H1 (cell line): ENCODE measurements at regions of chr11 and their contacts with region 1.

Region 1: DNA sequence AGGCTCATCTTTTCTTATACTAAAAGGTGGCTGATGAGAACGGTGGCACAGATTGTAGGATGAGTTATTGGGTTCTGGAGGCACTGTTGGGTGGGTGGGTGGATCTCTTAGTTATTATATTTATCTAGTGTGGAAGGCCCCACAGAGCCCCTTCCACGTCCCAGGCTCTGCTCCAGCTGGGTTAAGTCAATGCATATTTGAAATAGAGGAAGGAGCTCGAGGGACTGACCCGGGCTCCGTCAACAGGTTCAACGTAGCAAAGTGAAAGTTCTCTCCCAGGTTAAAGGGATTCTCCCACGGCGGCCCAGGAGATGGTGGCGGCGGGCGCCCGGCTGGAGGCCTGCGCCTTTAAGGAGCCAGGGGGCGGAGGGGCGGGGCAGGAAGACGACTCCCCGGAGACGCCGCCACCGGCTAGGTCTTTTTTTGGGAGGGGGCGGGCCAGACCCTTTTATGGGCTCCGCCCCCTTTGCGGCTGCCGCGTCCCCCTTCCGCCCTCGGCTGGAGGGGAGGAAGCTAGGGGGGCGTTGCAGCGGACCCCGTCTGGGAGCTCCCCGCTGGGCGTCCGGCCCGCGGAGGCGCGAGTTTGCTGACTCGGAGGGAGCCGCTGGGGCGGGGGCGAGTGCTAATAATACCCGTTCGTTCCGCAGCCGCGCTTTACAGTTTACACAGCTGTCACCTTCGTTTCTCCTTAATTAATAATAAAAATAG is 1.5 kb upstream of the INPPL1 start:
- DNase-seq: peak; percentile 84 to 92
- H3K4me3 ChIP-seq: peak overlapping the region; percentile 67 to 89 (median 76)
- H3K27ac ChIP-seq: no peak overlapping the region
- H3K4me1 ChIP-seq: peaks cover 10 to 11% (median 11%) of the 10 kb centered on the region in 4 experiments; a peak in 6 of 7 replicates
- H3K27me3 ChIP-seq: no peaks in the 10 kb centered on the region; a peak in 2 of 7 replicates
- CTCF ChIP-seq: 0 out of 4 replicates have a peak, but pooled peaks of 1 of the 3 experiments have one; percentile 1
- EP300 ChIP-seq: peak in 1 of 2 experiments; percentile 42; a peak in 1 of 3 replicates
- POLR2A ChIP-seq: no peak
- RAD21 ChIP-seq: no peak; a peak in 1 of 4 replicates

Region 2: GRCh38 chr11:72238040-72238450 is 15.0 kb after region 1 on chr11:
- CTCF ChIA-PET with region 1: interaction called, 72 read pairs
- POLR2A ChIA-PET with region 1: interaction called, 160 read pairs
- DNase-seq: peak; percentile 85 to 92
- H3K4me3 ChIP-seq: peak overlapping the region in 3 of 4 experiments; percentile 9 to 60 (median 34); a peak in 4 of 8 replicates
- H3K27ac ChIP-seq: 0 out of 2 replicates have a peak overlapping the region, but pooled peaks have one; percentile 6
- H3K4me1 ChIP-seq: peaks cover 3 to 29% (median 23%) of the 10 kb centered on the region in 4 experiments
- H3K27me3 ChIP-seq: peaks cover 36 to 47% (median 44%) of the 10 kb centered on the region in 4 experiments
- CTCF ChIP-seq: peak; percentile 88 to 95 (median 92)
- EP300 ChIP-seq: peak in 1 of 2 experiments; percentile 56; a peak in 1 of 3 replicates
- POLR2A ChIP-seq: no peak
- RAD21 ChIP-seq: peak; percentile 74 to 81

Region 3: DNA sequence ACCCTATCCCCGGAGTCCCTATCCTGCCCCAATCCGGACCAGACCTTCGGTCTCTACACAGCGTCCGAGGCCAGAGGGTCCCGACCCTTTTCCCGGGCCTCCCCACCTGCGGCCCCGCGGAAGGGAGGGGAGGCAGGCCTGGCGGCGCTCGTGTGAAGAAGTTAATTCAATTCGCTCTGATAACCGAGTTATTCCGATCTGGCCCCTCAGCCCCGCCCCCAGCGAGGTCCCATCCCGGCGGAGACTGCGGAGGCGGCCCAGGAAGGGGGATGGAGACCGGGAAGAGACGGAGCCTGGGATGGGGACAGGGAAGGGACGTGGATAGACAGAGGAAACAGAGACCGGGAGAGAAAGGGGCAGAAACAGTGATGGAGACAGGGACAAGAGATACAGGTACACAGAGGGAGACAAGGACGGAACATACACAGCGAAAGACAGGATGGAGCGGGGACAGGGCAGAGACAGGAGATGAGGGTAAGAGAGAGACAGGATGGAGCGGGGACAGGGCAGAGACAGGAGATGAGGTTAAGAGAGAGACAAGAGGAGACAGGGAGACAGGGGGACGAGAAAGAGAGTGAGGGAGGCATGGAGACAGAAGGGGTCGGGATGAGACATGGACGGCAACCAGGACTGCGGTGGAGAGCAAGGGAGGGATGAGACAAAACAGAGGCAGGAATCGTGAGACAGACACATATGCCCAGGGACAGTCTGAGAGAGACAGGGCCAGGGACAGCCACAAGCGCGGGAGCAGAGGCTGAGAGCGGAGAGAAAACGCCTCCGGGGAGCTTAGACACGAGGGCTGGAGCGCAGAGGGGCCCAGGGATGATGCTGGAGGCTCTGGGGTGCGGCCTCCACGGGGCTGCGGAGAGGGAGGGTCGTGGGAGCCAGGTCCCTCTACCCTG is 21.6 kb after region 1 on chr11:
- CTCF ChIA-PET with region 1: interaction called, 12 read pairs
- POLR2A ChIA-PET with region 1: interaction called, 160 read pairs
- DNase-seq: peak in 1 of 2 experiments; percentile 83
- H3K4me3 ChIP-seq: peak overlapping the region; percentile 53 to 87 (median 58)
- H3K27ac ChIP-seq: no peak overlapping the region
- H3K4me1 ChIP-seq: peaks cover 2 to 24% (median 11%) of the 10 kb centered on the region in 4 experiments
- H3K27me3 ChIP-seq: peaks cover 69 to 85% (median 81%) of the 10 kb centered on the region in 4 experiments
- CTCF ChIP-seq: no peak
- EP300 ChIP-seq: no peak
- POLR2A ChIP-seq: no peak
- RAD21 ChIP-seq: no peak

Region 4: GRCh38 chr11:72373163-72373562 is 150.1 kb after region 1 on chr11:
- CTCF ChIA-PET with region 1: no interaction called
- POLR2A ChIA-PET with region 1: no interaction called
- DNase-seq: no peak
- H3K4me3 ChIP-seq: no peak overlapping the region
- H3K27ac ChIP-seq: no peak overlapping the region
- H3K4me1 ChIP-seq: no peaks in the 10 kb centered on the region; a peak in 1 of 7 replicates
- H3K27me3 ChIP-seq: no peaks in the 10 kb centered on the region
- CTCF ChIP-seq: no peak
- EP300 ChIP-seq: no peak
- POLR2A ChIP-seq: no peak
- RAD21 ChIP-seq: no peak